Mammary epithelial cell (primary cell): ENCODE measurements at regions of chr12 and their contacts with region 1.

Region 1: GRCh38 chr12:27014085-27014858 is at the start of gene TM7SF3:
- DNase-seq: peak; percentile 92
- H3K4me3 ChIP-seq: peak within 1 kb of the TSS; percentile 73 to 97 (median 96)
- H3K27ac ChIP-seq: peak within 1 kb of the TSS; percentile 98
- H3K4me1 ChIP-seq: peaks cover 38% of the 10 kb centered on the region
- H3K27me3 ChIP-seq: no peaks in the 10 kb centered on the region
- CTCF ChIP-seq: peak; percentile 67 to 86
- total RNA-seq, gene TM7SF3: 182 to 298 TPM

Region 2: DNA sequence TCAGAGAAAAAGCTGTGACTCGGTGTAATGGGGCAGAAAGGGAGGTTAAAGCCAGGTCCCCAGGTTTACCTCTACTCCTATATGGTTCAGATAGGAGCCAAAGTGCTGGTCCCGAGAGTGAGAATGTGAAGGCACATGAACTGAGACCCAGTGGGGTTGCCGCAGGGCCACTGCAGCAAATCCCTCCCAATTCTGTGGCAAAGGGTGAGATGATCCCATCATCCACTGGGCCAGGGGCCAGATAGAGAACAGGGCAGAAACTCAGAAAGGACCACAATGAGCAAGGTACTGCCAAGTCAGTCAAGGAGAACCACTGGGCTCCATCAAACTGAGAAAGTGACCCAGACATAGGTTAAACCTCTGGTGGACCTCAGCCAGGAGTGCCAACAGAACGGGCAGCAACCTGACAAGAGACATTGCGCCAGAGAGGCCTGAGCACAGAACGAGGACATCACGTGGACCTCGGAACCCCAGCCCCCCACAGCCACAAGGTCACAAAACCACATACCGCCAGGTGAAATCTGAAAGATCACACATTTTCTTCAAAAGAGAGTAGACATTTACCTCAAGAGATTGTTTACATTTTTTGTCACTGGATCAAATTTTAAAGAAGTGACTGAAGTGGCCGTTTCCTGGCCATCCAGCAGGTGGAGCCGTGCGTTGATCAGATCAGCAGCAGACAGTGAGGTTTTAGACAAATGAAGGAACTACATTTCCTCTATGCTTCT is 160.8 kb before region 1 on chr12:
- CTCF ChIA-PET with region 1: no interaction called
- dilution Hi-C with region 1: no loop called
- in situ Hi-C with region 1: no loop called
- intact Hi-C with region 1: loop called (anchors 1 kb)
- DNase-seq: peak; percentile 39
- H3K4me3 ChIP-seq: no peak overlapping the region
- H3K27ac ChIP-seq: no peak overlapping the region
- H3K4me1 ChIP-seq: no peaks in the 10 kb centered on the region
- H3K27me3 ChIP-seq: no peaks in the 10 kb centered on the region
- CTCF ChIP-seq: peak; percentile 84 to 96

Region 3: GRCh38 chr12:26937875-26938700 is 76.2 kb before region 1 on chr12 and contains the starts of genes FGFR1OP2 and INTS13:
- CTCF ChIA-PET with region 1: no interaction called
- dilution Hi-C with region 1: no loop called
- in situ Hi-C with region 1: no loop called
- intact Hi-C with region 1: loop called (anchors 1 kb)
- DNase-seq: peak; percentile 98
- H3K4me3 ChIP-seq: peak within 1 kb of the TSS; percentile 89 to 98 (median 91)
- H3K27ac ChIP-seq: peak within 1 kb of the TSS; percentile 85
- H3K4me1 ChIP-seq: peaks cover 12% of the 10 kb centered on the region
- H3K27me3 ChIP-seq: no peaks in the 10 kb centered on the region
- CTCF ChIP-seq: no peak
- total RNA-seq, gene FGFR1OP2: 25.7 to 33.3 TPM
- total RNA-seq, gene INTS13: 25.0 to 37.1 TPM

Region 4: GRCh38 chr12:26976687-26977086 is 37.6 kb before region 1 on chr12:
- CTCF ChIA-PET with region 1: no interaction called
- dilution Hi-C with region 1: no loop called
- in situ Hi-C with region 1: no loop called
- intact Hi-C with region 1: no loop called
- DNase-seq: no peak
- H3K4me3 ChIP-seq: no peak overlapping the region
- H3K27ac ChIP-seq: no peak overlapping the region
- H3K4me1 ChIP-seq: peaks cover 3% of the 10 kb centered on the region
- H3K27me3 ChIP-seq: no peaks in the 10 kb centered on the region
- CTCF ChIP-seq: no peak

Region 5: GRCh38 chr12:27123642-27124041 is 109.4 kb after region 1 on chr12:
- CTCF ChIA-PET with region 1: interaction called, 7 read pairs
- dilution Hi-C with region 1: no loop called
- in situ Hi-C with region 1: no loop called
- intact Hi-C with region 1: loop called (anchors 1 kb)
- DNase-seq: peak; percentile 21
- H3K4me3 ChIP-seq: no peak overlapping the region
- H3K27ac ChIP-seq: no peak overlapping the region
- H3K4me1 ChIP-seq: no peaks in the 10 kb centered on the region
- H3K27me3 ChIP-seq: no peaks in the 10 kb centered on the region
- CTCF ChIP-seq: peak in 1 of 2 donors; percentile 52

Region 6: DNA sequence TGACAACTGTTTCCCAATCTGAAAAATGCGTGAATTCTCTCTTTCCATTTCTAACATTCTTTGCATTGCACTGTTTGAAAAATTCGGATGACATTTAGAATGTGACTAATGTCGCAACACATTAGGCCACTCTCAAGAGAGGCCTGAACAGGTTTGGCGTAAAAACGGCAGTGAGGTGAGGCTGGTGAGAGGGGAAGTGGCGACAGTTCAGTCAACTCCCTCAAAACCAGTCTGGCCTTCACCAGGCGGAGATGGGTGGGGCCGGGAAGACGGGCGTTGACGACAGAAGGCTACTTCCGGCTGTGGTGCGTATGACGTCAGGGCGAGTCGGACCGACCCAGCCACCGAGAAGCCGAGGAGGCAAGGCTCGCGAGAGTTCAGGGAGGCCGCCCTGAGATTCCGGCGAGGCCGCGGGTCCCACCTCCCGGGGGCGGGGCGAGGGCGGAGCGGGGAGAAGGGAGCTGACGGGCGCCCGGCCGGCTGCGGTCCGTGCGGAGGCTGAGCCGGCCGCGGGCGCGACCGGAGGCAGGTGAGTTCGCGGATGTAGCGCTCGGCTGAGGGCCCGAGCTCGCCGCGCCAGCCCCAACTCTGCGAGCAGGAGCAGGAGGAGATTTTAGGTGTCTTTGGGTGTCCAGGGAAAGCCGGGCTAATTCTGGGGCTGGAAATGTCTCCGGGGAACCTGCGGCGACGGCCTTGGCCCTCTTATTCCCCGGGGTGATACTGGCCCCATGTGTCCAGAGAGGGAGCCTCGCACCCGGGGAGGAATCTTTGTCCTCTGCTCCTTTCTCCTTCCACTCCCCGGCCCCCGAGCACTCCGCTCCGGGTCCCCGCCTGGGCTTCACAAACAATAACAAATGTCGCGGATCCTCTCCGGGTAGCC is 229.8 kb after region 1 on chr12 and contains the start of gene STK38L:
- CTCF ChIA-PET with region 1: interaction called, 5 read pairs
- dilution Hi-C with region 1: no loop called
- in situ Hi-C with region 1: no loop called
- intact Hi-C with region 1: loop called (anchors 2 kb)
- DNase-seq: peak; percentile 91
- H3K4me3 ChIP-seq: peak within 1 kb of the TSS; percentile 81 to 99 (median 86)
- H3K27ac ChIP-seq: peak within 1 kb of the TSS; percentile 90
- H3K4me1 ChIP-seq: peaks cover 20% of the 10 kb centered on the region
- H3K27me3 ChIP-seq: no peaks in the 10 kb centered on the region
- CTCF ChIP-seq: peak; percentile 7 to 52
- total RNA-seq, gene STK38L: 30.9 to 33.2 TPM

Region 7: GRCh38 chr12:27383429-27384260 is 369.4 kb after region 1 on chr12:
- CTCF ChIA-PET with region 1: no interaction called
- dilution Hi-C with region 1: no loop called
- in situ Hi-C with region 1: no loop called
- intact Hi-C with region 1: loop called (anchors 10 kb)
- DNase-seq: peak; percentile 83
- H3K4me3 ChIP-seq: no peak overlapping the region
- H3K27ac ChIP-seq: peak overlapping the region; percentile 68
- H3K4me1 ChIP-seq: peaks cover 11% of the 10 kb centered on the region
- H3K27me3 ChIP-seq: no peaks in the 10 kb centered on the region
- CTCF ChIP-seq: peak; percentile 94 to 96